ENCODE measurements at regions of chr1 and their contacts with region 1.

Region 1: DNA sequence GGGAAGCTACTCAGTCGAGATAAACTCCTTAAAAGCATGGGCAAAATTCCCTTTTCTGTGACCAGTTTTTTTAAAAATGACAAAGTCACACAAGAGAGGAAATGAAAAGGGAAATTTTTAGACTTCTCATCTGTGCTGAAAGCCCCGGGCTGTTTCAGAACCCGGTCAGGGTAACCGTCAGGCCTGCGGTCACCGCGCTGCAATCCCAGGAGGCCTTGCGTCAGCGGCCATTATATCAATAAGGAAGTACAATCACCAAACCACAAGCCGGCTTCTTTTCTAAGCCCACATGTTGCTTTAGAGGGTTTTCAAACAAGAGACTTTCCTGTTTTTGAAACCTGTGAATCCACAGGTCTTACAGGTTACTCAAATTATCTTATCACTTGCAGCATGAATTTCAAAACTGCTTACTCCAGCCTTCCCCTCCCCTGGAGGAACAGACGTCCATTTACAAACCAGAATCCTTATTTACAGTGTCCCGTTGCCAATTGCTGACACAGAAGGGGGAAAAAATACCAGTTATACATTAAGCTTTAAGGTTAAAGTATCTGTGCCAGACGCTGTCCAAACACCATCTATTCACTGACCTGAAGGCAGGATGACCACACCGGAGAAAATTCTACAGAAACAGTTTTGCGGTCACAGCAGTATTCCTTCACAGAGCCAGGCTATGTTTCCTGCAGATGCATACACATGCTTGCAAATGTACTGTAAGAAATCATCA is 165.3 kb downstream of the TOMM20 start:
- DNase-seq: peak; percentile 85 to 88
- H3K4me3 ChIP-seq: peak overlapping the region; percentile 6; the same call in 1 of the 2 replicates
- H3K4me3 Mint-ChIP-seq: peak overlapping the region; percentile 78
- H3K27ac Mint-ChIP-seq: peak overlapping the region; percentile 89
- H3K4me1 ChIP-seq: peaks cover 66% of the 10 kb centered on the region
- H3K4me1 Mint-ChIP-seq: peaks cover 76% of the 10 kb centered on the region
- H3K27me3 ChIP-seq: no peaks in the 10 kb centered on the region
- H3K27me3 Mint-ChIP-seq: no peaks in the 10 kb centered on the region
- CTCF ChIP-seq: no peak

Region 2: GRCh38 chr1:234716908-234717375 is 246.4 kb before region 1 on chr1:
- CTCF ChIA-PET with region 1: no interaction called
- POLR2A ChIA-PET with region 1: no interaction called
- intact Hi-C with region 1: loop called (anchors 1 kb)
- DNase-seq: peak in 1 of 2 experiments; percentile 49
- H3K4me3 ChIP-seq: no peak overlapping the region
- H3K4me3 Mint-ChIP-seq: peak overlapping the region; percentile 52
- H3K27ac Mint-ChIP-seq: peak overlapping the region; percentile 86
- H3K4me1 ChIP-seq: peaks cover 90% of the 10 kb centered on the region
- H3K4me1 Mint-ChIP-seq: peaks cover 80% of the 10 kb centered on the region
- H3K27me3 ChIP-seq: no peaks in the 10 kb centered on the region
- H3K27me3 Mint-ChIP-seq: no peaks in the 10 kb centered on the region
- CTCF ChIP-seq: no peak

Region 3: GRCh38 chr1:234875953-234876855 is 87.1 kb before region 1 on chr1:
- CTCF ChIA-PET with region 1: no interaction called
- POLR2A ChIA-PET with region 1: no interaction called
- intact Hi-C with region 1: loop called (anchors 1 kb)
- DNase-seq: peak; percentile 84 to 87
- H3K4me3 ChIP-seq: no peak overlapping the region
- H3K4me3 Mint-ChIP-seq: no peak overlapping the region
- H3K27ac Mint-ChIP-seq: peak overlapping the region; percentile 58
- H3K4me1 ChIP-seq: peaks cover 44% of the 10 kb centered on the region
- H3K4me1 Mint-ChIP-seq: peaks cover 35% of the 10 kb centered on the region
- H3K27me3 ChIP-seq: no peaks in the 10 kb centered on the region
- H3K27me3 Mint-ChIP-seq: no peaks in the 10 kb centered on the region
- CTCF ChIP-seq: no peak

Region 4: DNA sequence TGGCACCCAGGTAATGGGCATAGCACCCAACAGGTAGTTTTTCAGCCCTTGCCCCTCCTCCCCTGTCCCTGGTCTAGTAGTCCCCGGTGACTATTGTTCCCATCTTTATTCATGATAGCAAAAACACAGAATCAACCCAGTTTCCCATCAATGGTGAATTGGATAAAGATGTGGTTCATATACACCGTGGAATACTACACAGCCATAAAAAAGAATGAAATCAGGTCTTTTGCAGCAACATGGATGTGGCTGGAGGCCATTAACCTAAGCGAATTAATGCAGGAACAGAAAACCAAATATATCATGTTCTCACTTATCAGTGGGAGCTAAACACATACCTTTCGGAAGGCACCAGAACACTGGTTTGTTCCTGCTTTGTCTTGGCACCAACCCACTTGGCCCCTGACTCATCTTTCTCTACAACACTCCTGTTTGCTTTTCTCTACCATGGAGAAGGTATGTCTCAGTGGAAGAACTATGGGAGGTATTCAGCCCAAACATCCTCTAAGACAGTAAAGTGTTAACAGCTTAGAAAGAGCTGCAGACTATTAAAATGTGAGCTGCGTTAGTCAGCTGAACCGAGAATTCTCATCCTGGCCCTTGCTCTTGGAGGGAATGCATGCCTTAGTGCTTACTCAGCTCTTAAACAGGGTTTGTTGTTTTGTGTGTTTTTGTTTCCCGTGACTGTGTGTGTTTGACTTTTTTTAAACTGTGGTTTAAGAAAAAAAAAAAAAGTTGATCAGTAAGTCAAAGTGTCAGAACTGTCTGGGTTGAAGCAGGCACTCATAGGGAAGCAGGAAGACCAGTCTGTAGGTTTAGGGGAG is 37.7 kb before region 1 on chr1:
- CTCF ChIA-PET with region 1: no interaction called
- POLR2A ChIA-PET with region 1: no interaction called
- intact Hi-C with region 1: loop called (anchors 2 kb)
- DNase-seq: peak; percentile 61 to 66
- H3K4me3 ChIP-seq: no peak overlapping the region
- H3K4me3 Mint-ChIP-seq: peak overlapping the region; percentile 45
- H3K27ac Mint-ChIP-seq: peak overlapping the region; percentile 93
- H3K4me1 ChIP-seq: peaks cover 32% of the 10 kb centered on the region
- H3K4me1 Mint-ChIP-seq: peaks cover 36% of the 10 kb centered on the region
- H3K27me3 ChIP-seq: no peaks in the 10 kb centered on the region
- H3K27me3 Mint-ChIP-seq: no peaks in the 10 kb centered on the region
- CTCF ChIP-seq: no peak

Region 5: GRCh38 chr1:234987415-234988154 is 24.2 kb after region 1 on chr1:
- CTCF ChIA-PET with region 1: no interaction called
- POLR2A ChIA-PET with region 1: no interaction called
- intact Hi-C with region 1: loop called (anchors 1 kb)
- DNase-seq: peak; percentile 86 to 87
- H3K4me3 ChIP-seq: no peak overlapping the region
- H3K4me3 Mint-ChIP-seq: peak overlapping the region; percentile 29
- H3K27ac Mint-ChIP-seq: peak overlapping the region; percentile 92
- H3K4me1 ChIP-seq: peaks cover 55% of the 10 kb centered on the region
- H3K4me1 Mint-ChIP-seq: peaks cover 20% of the 10 kb centered on the region
- H3K27me3 ChIP-seq: no peaks in the 10 kb centered on the region
- H3K27me3 Mint-ChIP-seq: no peaks in the 10 kb centered on the region
- CTCF ChIP-seq: no peak

Region 6: GRCh38 chr1:235060607-235061470 is 97.5 kb after region 1 on chr1:
- CTCF ChIA-PET with region 1: no interaction called
- POLR2A ChIA-PET with region 1: no interaction called
- intact Hi-C with region 1: loop called (anchors 5 kb)
- DNase-seq: peak; percentile 78 to 88
- H3K4me3 ChIP-seq: no peak overlapping the region
- H3K4me3 Mint-ChIP-seq: peak overlapping the region; percentile 51
- H3K27ac Mint-ChIP-seq: peak overlapping the region; percentile 95
- H3K4me1 ChIP-seq: peaks cover 41% of the 10 kb centered on the region
- H3K4me1 Mint-ChIP-seq: peaks cover 51% of the 10 kb centered on the region
- H3K27me3 ChIP-seq: no peaks in the 10 kb centered on the region
- H3K27me3 Mint-ChIP-seq: no peaks in the 10 kb centered on the region
- CTCF ChIP-seq: no peak

Measured in Caco-2 (cell line).